Dorsolateral prefrontal cortex (tissue), 120 donors: ENCODE measurements at regions of chr6 and their contacts with region 1.

Region 1: GRCh38 chr6:149834513-149835481 is 29.4 kb downstream of the LRP11 start:
- DNase-seq: peak in 5 of 10 donors; percentile 46 to 78 (median 48)
- H3K4me3 ChIP-seq: no peak overlapping the region
- H3K27ac ChIP-seq: peak overlapping the region in 13 of 59 donors; percentile 1 to 46 (median 26)
- H3K27me3 ChIP-seq: no peaks in the 10 kb centered on the region
- CTCF ChIP-seq: peak; percentile 86 to 100 (median 96)

Region 2: DNA sequence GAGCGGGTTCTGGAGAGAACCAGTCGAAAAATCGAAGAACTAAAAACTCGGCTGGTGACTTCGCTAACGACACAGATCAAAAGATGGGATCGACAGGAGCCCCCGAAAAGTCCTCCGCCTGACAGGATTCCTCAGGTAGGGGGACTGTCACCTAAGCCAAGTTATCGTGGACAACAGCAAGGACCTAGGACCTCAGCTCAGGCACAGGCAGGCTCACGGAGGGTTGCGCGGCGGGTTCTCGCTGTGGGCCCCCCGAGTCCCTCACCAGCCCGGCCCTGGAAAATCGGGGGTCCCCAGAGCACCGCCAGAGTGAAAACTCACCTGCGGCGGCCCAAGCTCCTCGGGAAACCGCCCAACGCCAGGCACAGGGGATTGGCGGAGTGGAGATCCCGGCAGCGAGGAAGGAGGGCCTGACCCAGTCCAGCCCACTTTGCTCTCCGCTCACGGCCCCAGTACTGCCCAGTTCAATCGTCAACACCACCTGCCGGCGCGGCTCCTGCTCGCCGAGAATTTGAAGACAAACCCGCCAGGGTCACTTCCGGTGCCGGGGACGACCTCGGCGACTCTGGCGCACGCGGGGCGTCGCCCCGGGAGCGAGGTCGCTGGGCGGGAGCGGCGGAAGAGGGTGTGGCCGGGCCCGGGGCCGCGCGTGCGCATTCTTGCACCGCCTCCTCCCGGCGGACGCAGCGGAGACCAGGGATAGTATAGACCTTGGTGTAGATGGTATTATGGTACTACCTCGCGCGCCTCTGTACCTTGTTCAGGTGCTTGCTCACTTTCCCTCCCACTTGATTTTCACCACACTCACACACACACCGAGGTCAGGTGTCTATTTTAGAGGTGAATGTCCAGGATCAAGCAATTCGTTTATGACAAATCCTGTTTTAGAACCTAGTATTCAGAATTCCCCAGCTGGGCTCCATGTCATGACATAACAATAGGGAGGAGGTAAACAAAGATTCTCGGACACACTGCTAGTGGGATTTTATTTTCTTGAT is 186.3 kb before region 1 on chr6 and contains the start of gene KATNA1:
- intact Hi-C with region 1: no loop called
- DNase-seq: peak; percentile 63 to 93 (median 78)
- H3K4me3 ChIP-seq: peak within 1 kb of the TSS; percentile 60 to 99 (median 90)
- H3K27ac ChIP-seq: peak within 1 kb of the TSS in 56 of 59 donors; percentile 4 to 90 (median 76)
- H3K27me3 ChIP-seq: no peaks in the 10 kb centered on the region
- CTCF ChIP-seq: peak in 39 of 56 donors; percentile 5 to 58 (median 35)
- total RNA-seq, gene KATNA1: 4.9 to 16.3 (median 9.9) TPM

Region 3: GRCh38 chr6:149717588-149718458 is 117.0 kb before region 1 on chr6 and contains the start of gene LATS1:
- intact Hi-C with region 1: loop called (anchors 5 kb)
- DNase-seq: peak; percentile 78 to 94 (median 90)
- H3K4me3 ChIP-seq: peak within 1 kb of the TSS; percentile 56 to 100 (median 96)
- H3K27ac ChIP-seq: peak within 1 kb of the TSS; percentile 85 to 100 (median 97)
- H3K27me3 ChIP-seq: no peaks in the 10 kb centered on the region
- CTCF ChIP-seq: peak in 41 of 56 donors; percentile 3 to 60 (median 30)
- total RNA-seq, gene LATS1: 26.8 to 50.8 (median 36.9) TPM

Region 4: DNA sequence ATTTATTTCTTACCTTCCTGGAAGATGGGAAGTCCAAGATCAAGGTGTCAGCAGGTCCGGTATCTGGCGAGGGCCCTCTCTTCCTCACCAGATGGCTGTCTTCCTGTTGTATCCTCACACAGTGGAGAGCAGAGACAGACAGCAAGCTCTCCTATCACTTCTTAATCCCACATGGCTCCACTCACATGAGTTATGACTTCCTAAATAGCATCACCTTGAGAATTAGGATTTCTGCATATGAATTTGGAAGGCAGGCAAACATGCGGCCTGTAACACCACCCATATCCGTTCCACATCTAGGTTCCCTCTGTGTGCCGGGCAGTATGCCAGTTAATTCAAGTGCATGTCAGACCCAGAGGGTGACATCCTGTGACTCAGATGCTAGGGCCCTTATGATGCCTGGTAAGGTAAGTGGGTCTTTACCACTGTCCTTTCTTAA is 61.1 kb after region 1 on chr6:
- intact Hi-C with region 1: no loop called
- DNase-seq: peak in 1 of 10 donors; percentile 33
- H3K4me3 ChIP-seq: no peak overlapping the region
- H3K27ac ChIP-seq: peak overlapping the region in 8 of 59 donors; percentile 17 to 53 (median 40)
- H3K27me3 ChIP-seq: no peaks in the 10 kb centered on the region
- CTCF ChIP-seq: no peak

Region 5: DNA sequence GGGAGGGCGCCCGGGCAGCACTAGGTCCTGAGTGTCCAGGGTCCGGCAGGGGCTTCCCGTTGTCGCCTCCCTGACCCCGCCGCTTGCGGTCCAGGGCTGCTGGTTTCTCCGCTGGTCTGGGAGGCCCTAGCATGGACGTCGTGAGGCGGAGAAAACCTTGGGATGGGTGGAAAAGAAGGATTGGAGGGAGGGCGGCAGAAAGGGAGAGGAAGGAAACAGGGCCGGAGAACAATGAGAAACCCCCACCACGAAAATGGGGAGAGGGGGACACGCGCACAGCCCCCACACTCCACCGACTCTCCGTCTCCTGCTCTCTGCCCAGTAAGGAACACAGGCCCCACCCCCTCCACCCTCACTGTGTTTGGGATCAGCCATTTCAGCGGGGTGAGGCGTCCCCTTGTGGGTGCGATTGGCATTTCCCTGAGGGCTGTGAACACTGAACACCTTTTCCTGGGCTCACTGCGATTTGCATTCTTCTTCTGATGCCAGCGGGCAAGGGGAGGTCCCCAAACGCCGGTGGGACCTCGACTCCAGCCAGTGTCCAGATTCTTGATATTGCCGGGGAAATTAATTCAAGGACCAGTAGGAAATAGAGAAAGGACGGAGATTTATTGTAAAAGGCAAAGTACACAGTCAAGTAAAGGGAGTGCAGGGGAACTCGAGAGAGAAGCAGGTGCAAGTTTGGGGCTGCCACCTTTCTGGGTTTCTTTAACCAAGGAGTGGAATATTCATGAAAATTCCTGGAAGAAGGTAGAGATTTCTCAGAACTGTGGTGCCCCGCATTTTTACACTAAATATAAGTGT is 91.4 kb after region 1 on chr6:
- intact Hi-C with region 1: loop called (anchors 1 to 5 kb)
- DNase-seq: peak; percentile 60 to 89 (median 82)
- H3K4me3 ChIP-seq: peak overlapping the region; percentile 25 to 69 (median 54)
- H3K27ac ChIP-seq: peak overlapping the region in 16 of 59 donors; percentile 6 to 73 (median 40)
- H3K27me3 ChIP-seq: peaks cover 0 to 99% (median 22%) of the 10 kb centered on the region in 45 donors
- CTCF ChIP-seq: peak; percentile 47 to 89 (median 70)

Region 6: DNA sequence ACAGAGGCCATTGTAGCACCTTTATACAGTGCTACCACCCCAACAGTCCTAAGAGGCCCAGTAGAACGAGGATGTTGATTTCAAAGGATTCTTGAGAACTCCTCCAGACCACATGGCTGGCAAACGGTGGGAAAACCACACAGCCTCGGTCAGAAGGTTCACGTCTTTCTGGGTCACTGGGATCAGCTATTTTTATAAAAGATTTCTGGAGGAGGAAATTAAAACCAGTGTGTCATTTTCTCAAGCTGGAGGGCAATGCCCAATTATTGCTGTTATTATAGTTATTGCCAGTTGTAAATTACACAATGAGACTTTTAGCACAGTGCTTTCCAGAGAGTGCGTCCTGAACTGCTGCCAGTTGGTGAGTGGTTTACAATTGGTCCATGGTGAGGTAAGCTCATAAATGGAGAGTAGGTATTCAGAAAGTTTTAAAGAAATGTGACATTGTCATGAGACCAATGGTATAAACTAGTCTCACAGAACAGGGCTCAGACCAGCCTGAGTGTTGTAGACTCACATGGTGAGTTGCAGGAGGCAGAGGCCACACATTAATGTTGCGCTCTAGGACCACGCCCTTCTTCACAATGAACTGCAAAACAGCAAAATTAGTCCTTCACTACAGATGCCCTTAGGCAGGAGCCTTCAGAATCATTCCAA is 299.6 kb after region 1 on chr6:
- intact Hi-C with region 1: no loop called
- DNase-seq: no peak
- H3K4me3 ChIP-seq: no peak overlapping the region
- H3K27ac ChIP-seq: no peak overlapping the region
- H3K27me3 ChIP-seq: peaks cover 0 to 9% (median 0%) of the 10 kb centered on the region in 45 donors
- CTCF ChIP-seq: no peak

Region 7: GRCh38 chr6:150334790-150335783 is 500.3 kb after region 1 on chr6:
- intact Hi-C with region 1: loop called in 1 of 2 experiments (anchors 5 kb)
- DNase-seq: peak in 4 of 10 donors; percentile 18 to 70 (median 37)
- H3K4me3 ChIP-seq: no peak overlapping the region
- H3K27ac ChIP-seq: no peak overlapping the region
- H3K27me3 ChIP-seq: peaks cover 0 to 2% (median 0%) of the 10 kb centered on the region in 45 donors
- CTCF ChIP-seq: peak; percentile 51 to 94 (median 84)